Activated T-helper 1 cell treated with anti-CD3 and anti-CD28 coated beads, Interleukin-12 subunit alpha, Interleukin-12 subunit beta, Interleukin-2, Interleukin-4 antibody, amounts not matched to agents 30 ng/mL and 10 ng/mL and 1 ng/mL, durations not matched to agents 14 hours and 24 hours and 36 hours (primary cell): ENCODE measurements at regions of chr22 and their contacts with region 1.

Region 1: DNA sequence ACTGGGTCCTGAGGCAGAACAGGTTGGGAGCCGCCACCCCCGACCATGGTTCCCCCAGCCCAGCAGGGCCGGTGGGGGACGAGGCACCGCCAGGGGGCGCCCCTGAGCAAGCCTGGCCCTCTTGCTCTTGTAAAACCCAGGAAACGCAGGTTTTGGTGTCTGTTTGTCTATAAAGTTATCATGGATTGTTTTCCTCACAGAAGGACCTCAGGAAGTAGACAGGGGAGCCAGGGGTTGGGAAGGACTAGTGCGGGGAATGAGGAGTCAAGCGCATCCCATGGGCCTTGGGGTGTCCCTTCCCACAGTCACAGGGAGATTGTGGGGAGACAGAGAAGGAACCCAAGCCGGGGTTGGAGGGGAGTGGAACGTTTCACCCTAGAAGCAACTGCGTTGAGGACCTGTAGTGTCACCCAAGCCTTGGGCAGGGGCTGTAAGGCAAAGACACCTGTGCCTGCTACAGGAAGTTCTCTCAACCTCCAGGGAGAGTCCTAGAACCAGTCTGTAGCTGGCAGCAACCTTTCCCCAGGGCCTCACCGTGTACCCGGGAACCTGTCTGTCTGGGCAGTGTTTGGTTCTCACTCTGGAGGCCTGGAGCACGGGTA is 26.4 kb downstream of the KCTD17 start:
- DNase-seq: peak; percentile 79
- H3K4me3 Mint-ChIP-seq: peak overlapping the region; percentile 49
- H3K27ac Mint-ChIP-seq: peak overlapping the region; percentile 95
- H3K4me1 Mint-ChIP-seq: peaks cover 53% of the 10 kb centered on the region
- H3K27me3 Mint-ChIP-seq: peaks cover 3% of the 10 kb centered on the region

Region 2: GRCh38 chr22:37095113-37095512 is 17.1 kb after region 1 on chr22:
- intact Hi-C with region 1: loop called (anchors 1 kb)
- DNase-seq: no peak
- H3K4me3 Mint-ChIP-seq: no peak overlapping the region
- H3K27ac Mint-ChIP-seq: peak overlapping the region; percentile 80
- H3K4me1 Mint-ChIP-seq: peaks cover 38% of the 10 kb centered on the region
- H3K27me3 Mint-ChIP-seq: peaks cover 3% of the 10 kb centered on the region

Region 3: DNA sequence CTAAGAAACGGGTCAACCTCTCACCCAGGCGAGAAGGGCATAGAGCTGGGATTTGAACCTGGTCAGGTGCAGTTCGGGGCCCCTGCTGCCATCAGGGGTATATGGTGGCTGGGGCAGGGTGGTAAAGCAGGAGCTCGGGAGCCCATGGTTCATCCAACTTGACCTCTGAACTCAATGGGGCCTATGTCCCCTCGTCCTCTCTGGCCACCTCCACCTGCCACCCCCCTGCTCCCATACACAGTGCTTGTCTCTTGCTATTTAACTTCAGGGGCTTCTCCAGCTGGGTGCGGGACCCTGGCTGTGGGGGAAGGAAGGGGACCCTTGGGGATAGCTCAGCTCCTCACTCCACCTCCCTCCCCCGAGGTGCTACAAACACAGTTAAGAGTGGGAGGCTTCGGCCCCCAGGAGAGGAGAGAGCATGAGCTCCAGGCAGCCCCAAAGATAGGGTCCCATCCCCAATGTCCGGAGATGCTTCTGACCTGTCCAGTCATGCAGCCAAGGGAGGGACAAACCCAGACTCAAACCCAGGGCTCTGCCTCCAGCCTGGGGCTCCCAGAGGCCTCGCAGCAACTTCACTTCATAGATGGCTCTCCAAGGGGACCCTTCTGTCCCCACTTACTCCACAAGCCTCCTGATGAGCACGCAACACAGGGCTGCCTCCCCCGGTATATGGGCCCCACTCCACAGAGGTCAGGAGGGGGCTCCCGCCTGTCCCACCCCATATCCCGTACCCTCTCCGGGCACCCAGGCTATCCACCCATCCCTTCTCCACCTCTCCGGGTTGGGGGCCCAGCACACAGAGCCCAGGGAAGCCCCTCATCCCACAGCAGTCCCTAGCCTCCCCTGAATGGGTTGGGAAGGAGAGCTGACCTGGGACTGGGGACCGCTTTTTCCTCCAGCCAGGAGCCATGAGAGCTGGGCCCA is 71.0 kb after region 1 on chr22:
- intact Hi-C with region 1: loop called (anchors 1 kb)
- DNase-seq: no peak
- H3K4me3 Mint-ChIP-seq: peak overlapping the region; percentile 92
- H3K27ac Mint-ChIP-seq: peak overlapping the region; percentile 93
- H3K4me1 Mint-ChIP-seq: peaks cover 72% of the 10 kb centered on the region
- H3K27me3 Mint-ChIP-seq: no peaks in the 10 kb centered on the region

Region 4: DNA sequence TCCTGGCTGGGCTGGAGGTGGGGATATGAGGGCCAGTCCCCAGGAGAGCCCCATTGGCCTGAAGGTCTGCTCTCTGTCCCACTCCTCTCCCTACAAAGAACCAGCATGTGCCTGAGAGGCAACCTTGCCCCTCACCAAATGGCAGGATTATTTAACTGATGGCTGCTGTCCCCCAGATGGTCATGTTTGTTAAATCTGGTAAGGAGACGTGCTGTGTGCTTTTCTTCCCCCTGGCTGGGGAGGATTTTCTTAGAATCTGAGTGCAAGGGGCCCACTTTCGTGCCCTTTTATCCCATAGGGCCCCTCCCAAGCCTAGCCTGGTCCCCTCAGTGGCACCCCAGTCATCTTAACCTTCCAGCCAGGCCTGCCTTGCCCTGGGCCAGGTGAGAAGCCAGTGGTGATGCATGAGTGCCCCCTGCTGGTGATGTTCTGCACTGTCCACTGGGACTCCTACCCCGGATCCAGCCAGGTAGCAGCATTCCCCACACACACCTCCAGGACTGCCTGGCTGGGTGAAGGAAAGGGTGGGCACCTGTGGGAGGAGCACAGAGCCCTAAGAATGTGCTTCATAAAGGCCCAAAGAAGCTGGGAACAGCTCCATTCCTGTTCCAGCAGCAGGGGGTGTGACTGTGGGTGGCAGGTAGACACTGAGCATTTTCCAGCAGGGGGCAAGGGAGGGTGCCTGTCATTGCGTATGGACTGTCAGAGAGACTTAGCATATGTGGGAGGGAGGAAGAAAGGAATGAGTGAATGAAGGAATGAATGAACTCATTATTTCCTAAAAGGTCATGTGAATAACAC is 379.3 kb after region 1 on chr22:
- intact Hi-C with region 1: loop called (anchors 2 kb)
- DNase-seq: peak; percentile 75
- H3K4me3 Mint-ChIP-seq: no peak overlapping the region
- H3K27ac Mint-ChIP-seq: no peak overlapping the region
- H3K4me1 Mint-ChIP-seq: peaks cover 18% of the 10 kb centered on the region
- H3K27me3 Mint-ChIP-seq: no peaks in the 10 kb centered on the region